ENCODE measurements at regions of chr14 and their contacts with region 1.

Region 1: DNA sequence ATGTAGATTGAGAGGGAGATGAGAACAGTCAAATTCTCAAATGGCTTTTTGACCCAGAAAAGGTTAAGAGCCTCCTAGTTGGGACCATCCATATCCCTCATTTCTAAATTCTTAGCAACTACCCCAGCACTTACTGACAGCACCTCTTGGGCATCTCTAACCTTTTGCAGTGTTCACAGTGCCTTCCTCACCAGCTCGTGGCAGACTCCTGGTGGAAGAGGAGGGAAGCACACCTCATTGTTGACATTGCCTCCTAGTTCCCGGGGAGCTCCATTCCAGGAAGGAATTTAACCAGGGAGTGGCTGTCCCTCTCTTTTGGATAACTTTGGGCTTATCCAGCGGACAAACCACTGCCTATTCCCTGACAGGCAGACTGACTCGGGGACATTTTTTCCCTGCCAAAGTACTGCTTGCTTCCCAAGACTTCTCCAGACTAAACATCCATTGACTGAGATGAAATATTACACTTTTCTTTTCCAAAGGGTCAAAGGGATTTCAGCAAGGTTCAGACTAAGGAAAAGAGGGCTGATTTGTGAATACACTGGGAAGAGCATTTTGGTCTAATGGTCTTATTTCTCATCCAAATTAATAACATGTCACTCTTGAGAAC is 9.0 kb upstream of the OR6J1 start:
- DNase-seq: peak; percentile 93
- ATAC-seq: peak; percentile 62
- H3K4me3 ChIP-seq: no peak overlapping the region
- H3K27ac ChIP-seq: no peak overlapping the region
- H3K4me1 ChIP-seq: peaks cover 37% of the 10 kb centered on the region
- H3K27me3 ChIP-seq: no peaks in the 10 kb centered on the region
- CTCF ChIP-seq: peak; percentile 92

Region 2: GRCh38 chr14:22314181-22314820 is 338.8 kb before region 1 on chr14:
- CTCF ChIA-PET with region 1: no interaction called
- POLR2A ChIA-PET with region 1: no interaction called
- intact Hi-C with region 1: loop called (anchors 10 kb)
- DNase-seq: peak; percentile 88
- ATAC-seq: peak; percentile 52
- H3K4me3 ChIP-seq: no peak overlapping the region
- H3K27ac ChIP-seq: no peak overlapping the region
- H3K4me1 ChIP-seq: peaks cover 29% of the 10 kb centered on the region
- H3K27me3 ChIP-seq: no peaks in the 10 kb centered on the region
- CTCF ChIP-seq: peak; percentile 81

Region 3: GRCh38 chr14:22556990-22557623 is 96.0 kb before region 1 on chr14:
- CTCF ChIA-PET with region 1: interaction called, 7 read pairs
- POLR2A ChIA-PET with region 1: no interaction called
- intact Hi-C with region 1: loop called (anchors 1 kb)
- DNase-seq: peak; percentile 78
- ATAC-seq: peak; percentile 66
- H3K4me3 ChIP-seq: peak overlapping the region; percentile 57
- H3K27ac ChIP-seq: peak overlapping the region; percentile 94
- H3K4me1 ChIP-seq: peaks cover 51% of the 10 kb centered on the region
- H3K27me3 ChIP-seq: no peaks in the 10 kb centered on the region
- CTCF ChIP-seq: peak; percentile 99

Region 4: DNA sequence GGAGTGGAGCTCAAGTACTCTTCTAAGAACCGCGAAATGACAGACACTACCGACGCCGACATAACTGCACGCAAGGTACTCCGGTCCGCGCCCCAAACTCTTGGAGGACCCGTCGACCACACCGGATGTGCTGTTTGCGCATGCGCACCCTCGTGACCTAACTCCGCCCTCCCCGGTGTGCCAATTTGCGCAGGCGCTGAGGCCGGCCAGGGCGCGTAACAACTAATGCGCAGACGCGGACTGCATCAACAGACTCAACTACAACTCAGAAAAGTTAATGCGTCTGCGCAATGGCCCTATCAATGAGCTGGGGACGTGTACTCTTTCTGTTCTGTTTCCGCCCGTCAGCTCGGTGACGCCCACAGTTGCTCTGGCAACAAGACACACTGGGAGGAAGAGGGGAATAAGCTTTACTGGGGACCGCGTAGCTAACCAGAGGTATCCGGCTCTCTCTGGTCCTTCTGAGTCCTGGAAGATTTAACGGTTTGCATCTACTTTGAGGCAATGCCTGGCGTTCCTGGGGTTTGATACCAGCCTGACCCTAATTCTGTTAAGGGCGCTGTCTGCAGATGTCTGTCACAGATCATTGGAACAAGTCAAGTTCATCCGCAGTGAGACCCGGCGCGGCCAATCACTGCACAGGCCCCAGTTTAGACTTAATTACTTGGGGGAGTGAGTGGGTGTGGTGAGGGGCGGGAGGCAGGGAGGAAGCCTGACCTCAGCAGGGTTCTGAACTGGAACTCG is 63.8 kb before region 1 on chr14 and contains the start of gene DAD1:
- CTCF ChIA-PET with region 1: interaction called, 11 read pairs
- POLR2A ChIA-PET with region 1: interaction called, 8 read pairs
- intact Hi-C with region 1: no loop called
- DNase-seq: peak; percentile 99
- ATAC-seq: peak; percentile 97
- H3K4me3 ChIP-seq: peak within 1 kb of the TSS; percentile 80
- H3K27ac ChIP-seq: peak within 1 kb of the TSS; percentile 75
- H3K4me1 ChIP-seq: peaks cover 25% of the 10 kb centered on the region
- H3K27me3 ChIP-seq: no peaks in the 10 kb centered on the region
- CTCF ChIP-seq: no peak
- total RNA-seq, gene DAD1: 228 and 258 TPM in 2 replicates

Region 5: GRCh38 chr14:22614224-22614799 is 38.8 kb before region 1 on chr14:
- CTCF ChIA-PET with region 1: no interaction called
- POLR2A ChIA-PET with region 1: no interaction called
- intact Hi-C with region 1: loop called (anchors 5 kb)
- DNase-seq: peak; percentile 97
- ATAC-seq: peak; percentile 95
- H3K4me3 ChIP-seq: no peak overlapping the region
- H3K27ac ChIP-seq: peak overlapping the region; percentile 65
- H3K4me1 ChIP-seq: peaks cover 25% of the 10 kb centered on the region
- H3K27me3 ChIP-seq: no peaks in the 10 kb centered on the region
- CTCF ChIP-seq: no peak

Region 6: GRCh38 chr14:22630486-22630885 is 22.6 kb before region 1 on chr14:
- CTCF ChIA-PET with region 1: no interaction called
- POLR2A ChIA-PET with region 1: no interaction called
- intact Hi-C with region 1: no loop called
- DNase-seq: no peak
- ATAC-seq: no peak
- H3K4me3 ChIP-seq: no peak overlapping the region
- H3K27ac ChIP-seq: no peak overlapping the region
- H3K4me1 ChIP-seq: no peaks in the 10 kb centered on the region
- H3K27me3 ChIP-seq: no peaks in the 10 kb centered on the region
- CTCF ChIP-seq: no peak

Region 7: DNA sequence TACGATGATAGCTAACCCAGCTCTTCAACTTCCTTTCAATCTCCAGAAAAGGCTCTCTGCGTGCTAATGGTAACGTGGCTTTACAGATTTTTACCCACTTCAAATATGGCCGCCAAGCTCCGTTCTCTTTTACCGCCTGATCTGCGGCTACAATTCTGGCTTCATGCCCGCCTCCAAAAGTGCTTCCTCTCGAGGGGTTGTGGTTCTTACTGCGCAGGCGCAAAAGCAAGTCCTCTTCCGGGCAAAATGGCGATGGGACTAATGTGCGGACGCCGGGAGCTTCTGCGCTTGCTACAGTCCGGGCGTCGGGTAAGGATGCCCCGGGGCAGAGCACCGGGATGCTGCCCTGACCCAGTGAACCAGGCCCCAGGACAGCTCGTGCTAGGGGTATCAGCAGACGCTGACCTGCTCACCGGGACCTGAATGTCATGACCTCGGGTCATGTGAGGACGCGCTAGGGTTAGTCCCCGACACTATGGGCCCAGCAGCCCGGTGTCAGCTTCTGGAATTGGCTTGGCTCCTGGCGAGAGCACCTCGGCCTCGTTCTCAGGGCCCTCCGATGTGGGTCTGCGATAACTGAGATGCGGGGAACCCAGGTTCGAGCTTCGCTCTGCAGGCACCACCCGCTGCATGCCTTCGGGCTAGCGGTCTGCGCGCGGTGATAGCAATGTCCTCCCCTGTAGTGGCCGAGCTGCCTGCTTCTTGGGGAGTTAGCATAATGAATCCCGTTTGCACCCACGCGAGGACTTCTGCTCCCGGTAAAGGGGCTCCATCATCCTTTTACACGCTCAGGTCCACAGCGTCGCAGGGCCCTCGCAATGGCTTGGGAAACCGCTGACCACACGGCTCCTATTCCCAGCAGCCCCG is 113.6 kb after region 1 on chr14 and contains the start of gene OXA1L:
- CTCF ChIA-PET with region 1: interaction called, 6 read pairs
- POLR2A ChIA-PET with region 1: no interaction called
- intact Hi-C with region 1: loop called (anchors 2 kb)
- DNase-seq: peak; percentile 98
- ATAC-seq: peak; percentile 84
- H3K4me3 ChIP-seq: peak within 1 kb of the TSS; percentile 98
- H3K27ac ChIP-seq: peak within 1 kb of the TSS; percentile 65
- H3K4me1 ChIP-seq: peaks cover 18% of the 10 kb centered on the region
- H3K27me3 ChIP-seq: no peaks in the 10 kb centered on the region
- CTCF ChIP-seq: no peak
- total RNA-seq, gene OXA1L: 126 and 146 TPM in 2 replicates

Region 8: DNA sequence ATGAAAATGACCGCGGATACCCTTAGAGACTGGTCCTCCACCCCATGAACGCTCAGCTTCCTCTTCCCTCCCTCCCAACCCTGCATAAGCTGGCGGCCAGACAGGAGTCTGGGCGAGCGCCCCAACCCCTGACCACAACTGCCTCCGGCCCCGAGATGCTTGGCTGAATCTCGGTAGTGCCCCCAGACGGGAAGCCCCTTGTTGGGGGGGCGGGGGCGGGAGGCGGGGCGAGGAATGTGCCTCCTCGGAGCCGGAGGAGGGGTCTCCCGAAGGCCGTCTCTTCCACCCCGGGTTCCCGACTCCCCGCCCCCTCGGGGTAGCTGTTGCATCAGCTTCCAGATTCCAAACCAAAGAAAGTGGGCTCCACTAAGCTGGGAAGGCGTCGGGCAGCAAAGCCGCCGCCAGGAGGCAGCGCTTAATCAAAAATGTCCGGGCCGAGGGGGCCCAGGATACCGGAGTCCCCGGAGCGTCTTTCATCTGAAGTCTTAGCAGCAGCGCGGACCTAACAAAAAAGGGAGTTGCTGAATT is 169.5 kb after region 1 on chr14:
- CTCF ChIA-PET with region 1: interaction called, 3 read pairs
- POLR2A ChIA-PET with region 1: no interaction called
- intact Hi-C with region 1: loop called (anchors 10 kb)
- DNase-seq: peak; percentile 89
- ATAC-seq: peak; percentile 83
- H3K4me3 ChIP-seq: peak overlapping the region; percentile 62
- H3K27ac ChIP-seq: no peak overlapping the region
- H3K4me1 ChIP-seq: peaks cover 39% of the 10 kb centered on the region
- H3K27me3 ChIP-seq: no peaks in the 10 kb centered on the region
- CTCF ChIP-seq: peak; percentile 88

Measured in PC-3 (cell line).